H1 (cell line): ENCODE measurements at regions of chr7 and their contacts with region 1.

Region 1: DNA sequence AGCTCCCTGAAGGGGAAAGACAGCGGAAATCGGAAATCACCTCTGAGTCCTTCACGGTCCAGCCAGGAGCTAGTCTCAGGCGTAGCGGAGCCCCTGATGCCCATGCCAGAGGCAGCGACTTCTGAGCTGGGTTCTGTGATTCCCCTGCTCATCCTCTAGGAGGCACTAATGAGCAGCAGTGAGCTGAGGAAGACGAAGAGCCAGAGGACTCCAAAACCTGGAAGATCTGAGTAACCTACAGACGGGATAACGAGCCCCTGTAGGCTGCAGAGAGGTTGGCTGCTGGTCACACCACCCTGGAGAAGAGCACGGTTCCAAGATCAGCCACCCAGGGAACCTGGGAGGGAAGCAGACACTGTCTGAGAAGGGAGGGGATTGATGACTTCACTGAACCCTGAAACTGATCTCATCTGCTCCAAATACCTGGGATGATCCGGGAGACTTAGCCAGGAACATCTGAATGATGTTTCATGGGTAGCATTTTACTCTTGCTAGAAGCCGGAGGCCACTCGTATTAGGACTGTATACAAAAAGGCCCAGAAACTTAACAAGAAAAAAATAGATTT is 304.1 kb downstream of the PAXIP1 start:
- DNase-seq: peak; percentile 31 to 72
- H3K4me3 ChIP-seq: no peak overlapping the region
- H3K27ac ChIP-seq: no peak overlapping the region
- H3K4me1 ChIP-seq: no peaks in the 10 kb centered on the region; a peak in 3 of 7 replicates
- H3K27me3 ChIP-seq: no peaks in the 10 kb centered on the region
- CTCF ChIP-seq: peak; percentile 76 to 93 (median 79)
- EP300 ChIP-seq: no peak
- POLR2A ChIP-seq: no peak
- RAD21 ChIP-seq: peak; percentile 68 to 72

Region 2: GRCh38 chr7:154530136-154530535 is 168.7 kb before region 1 on chr7:
- CTCF ChIA-PET with region 1: no interaction called
- POLR2A ChIA-PET with region 1: no interaction called
- DNase-seq: no peak
- H3K4me3 ChIP-seq: no peak overlapping the region
- H3K27ac ChIP-seq: no peak overlapping the region
- H3K4me1 ChIP-seq: no peaks in the 10 kb centered on the region
- H3K27me3 ChIP-seq: no peaks in the 10 kb centered on the region
- CTCF ChIP-seq: no peak
- EP300 ChIP-seq: no peak
- POLR2A ChIP-seq: no peak
- RAD21 ChIP-seq: no peak

Region 3: DNA sequence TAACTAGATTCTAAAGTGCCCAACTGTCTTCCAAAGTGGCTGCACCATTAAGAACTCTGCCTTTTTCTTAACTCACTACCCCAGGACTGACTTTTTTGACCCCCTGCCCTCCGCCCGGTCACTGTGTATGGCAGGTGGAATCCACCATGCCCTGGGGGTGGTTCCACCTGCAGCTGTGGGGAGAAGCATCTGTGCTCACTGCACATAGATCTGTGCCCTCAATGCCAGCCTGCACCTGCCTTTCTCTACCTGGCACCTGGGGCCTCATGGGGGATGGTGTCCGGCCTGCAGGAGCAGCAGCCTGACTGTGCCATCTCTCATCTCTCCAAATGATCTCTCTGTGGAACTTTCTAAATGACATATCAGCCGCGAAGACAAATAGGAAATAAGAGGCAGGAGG is 49.4 kb before region 1 on chr7:
- CTCF ChIA-PET with region 1: no interaction called
- POLR2A ChIA-PET with region 1: no interaction called
- DNase-seq: no peak
- H3K4me3 ChIP-seq: no peak overlapping the region
- H3K27ac ChIP-seq: no peak overlapping the region
- H3K4me1 ChIP-seq: no peaks in the 10 kb centered on the region
- H3K27me3 ChIP-seq: no peaks in the 10 kb centered on the region
- CTCF ChIP-seq: no peak
- EP300 ChIP-seq: no peak
- POLR2A ChIP-seq: no peak
- RAD21 ChIP-seq: no peak

Region 4: GRCh38 chr7:154684666-154685563 is 13.9 kb before region 1 on chr7:
- CTCF ChIA-PET with region 1: interaction called, 13 read pairs
- POLR2A ChIA-PET with region 1: no interaction called
- DNase-seq: no peak
- H3K4me3 ChIP-seq: no peak overlapping the region
- H3K27ac ChIP-seq: no peak overlapping the region
- H3K4me1 ChIP-seq: peaks cover 0 to 9% (median 0%) of the 10 kb centered on the region in 4 experiments; a peak in 1 of 7 replicates
- H3K27me3 ChIP-seq: no peaks in the 10 kb centered on the region
- CTCF ChIP-seq: no peak
- EP300 ChIP-seq: no peak
- POLR2A ChIP-seq: no peak
- RAD21 ChIP-seq: no peak

Region 5: DNA sequence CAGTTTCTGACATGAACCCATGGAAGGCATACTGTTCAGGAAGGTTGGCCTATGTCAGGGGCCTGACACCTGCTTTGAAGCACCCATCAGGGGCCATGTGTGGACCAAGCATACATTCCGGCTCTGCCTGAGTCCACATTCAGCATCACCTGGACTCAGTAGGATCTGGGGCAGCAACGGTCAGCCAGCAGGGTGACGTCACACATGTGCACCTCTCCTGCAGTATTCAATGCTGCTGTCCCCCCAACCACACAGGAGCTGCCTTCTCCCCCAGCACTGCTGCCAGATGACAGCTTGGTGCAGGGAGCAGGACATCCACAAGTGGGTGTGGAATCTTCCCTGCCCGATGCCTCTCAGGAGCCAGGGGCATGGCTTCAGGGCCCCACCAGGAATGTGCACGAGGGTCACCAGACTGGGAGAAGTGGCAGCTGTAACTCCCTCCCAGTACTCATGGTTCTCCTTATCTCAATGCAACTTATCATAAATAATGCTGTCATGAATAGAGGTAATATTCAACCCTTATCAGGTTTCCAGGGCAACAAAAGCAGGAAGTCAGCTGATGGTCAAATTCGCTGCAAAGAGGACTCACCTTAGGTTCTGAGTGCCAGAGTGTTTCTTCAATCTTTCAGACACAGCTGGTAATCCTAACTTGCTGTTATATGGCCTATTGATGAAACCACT is 11.2 kb after region 1 on chr7:
- CTCF ChIA-PET with region 1: interaction called, 18 read pairs
- POLR2A ChIA-PET with region 1: no interaction called
- DNase-seq: no peak
- H3K4me3 ChIP-seq: no peak overlapping the region
- H3K27ac ChIP-seq: no peak overlapping the region
- H3K4me1 ChIP-seq: no peaks in the 10 kb centered on the region
- H3K27me3 ChIP-seq: no peaks in the 10 kb centered on the region
- CTCF ChIP-seq: no peak
- EP300 ChIP-seq: no peak
- POLR2A ChIP-seq: no peak
- RAD21 ChIP-seq: no peak